Sciatic nerve (tissue), 2 donors: ENCODE measurements at regions of chr14 and their contacts with region 1.

Region 1: DNA sequence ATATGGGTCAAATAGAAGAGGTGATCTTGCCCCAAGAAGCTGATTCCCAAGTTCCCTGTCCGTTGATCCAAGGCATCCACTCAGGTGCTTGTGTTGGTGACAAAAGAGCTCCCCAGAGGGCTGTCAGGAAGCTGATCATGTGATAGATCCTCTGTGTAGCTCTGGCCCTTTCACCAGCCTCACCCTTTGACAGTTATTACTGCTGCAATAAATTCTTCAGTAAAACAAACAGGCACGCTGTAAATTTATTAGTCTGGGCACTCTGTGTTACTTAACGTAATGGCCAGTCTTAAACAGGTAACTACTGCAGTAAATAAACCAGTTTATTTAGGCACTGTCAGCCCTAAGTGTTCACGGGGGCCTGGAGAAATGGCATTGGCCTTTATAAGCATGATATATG is 473.9 kb downstream of the BCL11B start:
- DNase-seq: no peak
- ATAC-seq: no peak

Region 2: DNA sequence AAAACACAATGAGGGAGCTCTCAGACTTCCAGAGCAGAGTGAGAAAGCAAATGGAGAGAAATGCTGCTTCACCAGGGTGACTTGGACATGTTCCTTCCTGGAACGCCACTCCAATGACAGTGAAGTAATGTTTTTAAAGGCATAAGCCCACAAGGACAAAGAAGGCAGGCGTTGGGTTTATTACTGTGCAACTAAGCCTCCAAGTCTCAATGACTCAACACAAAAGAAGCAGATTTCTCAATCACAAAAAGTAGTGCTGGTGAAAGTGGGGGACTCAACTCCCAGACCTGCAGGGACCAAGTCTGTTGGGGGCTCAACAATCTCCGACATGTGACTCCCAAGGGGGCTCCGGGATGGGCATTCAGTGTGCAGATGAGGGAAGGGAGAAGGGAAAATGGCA is 31.3 kb before region 1 on chr14:
- intact Hi-C with region 1: loop called (anchors 1 kb)
- DNase-seq: no peak
- ATAC-seq: peak; percentile 93

Region 3: DNA sequence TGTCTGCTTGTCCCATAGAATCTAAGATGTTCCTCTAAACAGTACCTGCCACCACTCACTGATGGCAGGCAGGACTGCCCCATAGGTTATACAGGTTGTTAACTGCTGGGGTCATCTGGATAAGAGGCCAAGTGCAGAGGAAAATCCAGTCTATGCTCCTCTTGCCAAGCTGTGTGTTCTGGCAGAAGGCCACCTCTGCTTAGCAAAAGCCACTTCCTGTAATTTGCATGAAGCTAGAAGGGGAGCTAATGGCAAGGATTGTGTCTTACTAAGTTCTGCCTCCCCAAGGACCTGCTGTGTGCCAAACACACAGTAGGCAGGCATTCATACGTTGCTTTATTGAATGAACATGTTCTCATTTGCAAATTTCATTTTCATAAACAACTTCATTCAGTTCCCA is 28.5 kb after region 1 on chr14:
- intact Hi-C with region 1: loop called (anchors 2 kb)
- DNase-seq: no peak
- ATAC-seq: no peak